Vagina (tissue), 2 donors: ENCODE measurements at regions of chr5 and their contacts with region 1.

Region 1: GRCh38 chr5:38795986-38796741 is 49.6 kb upstream of the OSMR start:
- DNase-seq: no peak
- H3K4me3 ChIP-seq: no peak overlapping the region
- H3K27ac ChIP-seq: peak overlapping the region; percentile 78
- H3K4me1 ChIP-seq: peaks cover 26% of the 10 kb centered on the region
- H3K27me3 ChIP-seq: no peaks in the 10 kb centered on the region
- CTCF ChIP-seq: no peak
- POLR2A ChIP-seq: no peak

Region 2: DNA sequence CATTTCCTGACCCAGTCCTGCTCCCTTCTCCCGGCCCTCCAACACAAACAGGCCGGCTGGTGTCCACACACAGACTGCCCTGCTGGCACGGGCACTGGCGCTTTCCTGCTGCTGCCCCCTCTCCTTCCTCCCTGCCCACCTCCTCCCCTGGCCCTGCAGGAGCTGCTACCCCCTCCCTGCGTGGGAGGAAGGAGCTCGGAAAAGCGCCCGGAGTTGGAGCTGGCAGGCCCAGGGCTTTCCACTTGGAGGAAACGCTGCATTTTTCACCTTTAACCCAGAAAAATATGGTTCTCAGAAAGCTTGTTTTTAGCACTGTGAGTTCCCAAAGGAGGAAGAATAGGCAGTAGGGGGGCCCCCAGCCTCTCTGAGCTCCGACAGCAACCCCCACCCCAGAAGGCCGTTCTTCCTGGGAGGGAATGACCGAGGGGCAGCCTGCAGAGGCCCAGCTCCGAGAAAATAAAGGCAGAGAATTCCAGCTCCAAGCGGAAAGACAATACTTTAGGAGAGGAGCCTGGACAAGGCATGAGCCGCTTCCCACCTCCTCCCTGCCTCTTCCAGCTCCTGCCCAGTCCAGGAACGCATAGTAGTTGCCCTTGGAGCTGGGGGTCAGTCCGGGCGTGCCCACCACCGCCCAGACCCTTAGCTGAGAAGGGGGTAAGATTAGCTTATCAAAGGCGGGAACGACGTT is 328.7 kb before region 1 on chr5:
- intact Hi-C with region 1: loop called (anchors 5 kb)
- DNase-seq: peak in 1 of 2 donors; percentile 90
- H3K4me3 ChIP-seq: peak overlapping the region in 1 of 2 donors; percentile 12
- H3K27ac ChIP-seq: peak overlapping the region; percentile 82
- H3K4me1 ChIP-seq: peaks cover 66% of the 10 kb centered on the region
- H3K27me3 ChIP-seq: no peaks in the 10 kb centered on the region
- CTCF ChIP-seq: no peak
- POLR2A ChIP-seq: no peak

Region 3: DNA sequence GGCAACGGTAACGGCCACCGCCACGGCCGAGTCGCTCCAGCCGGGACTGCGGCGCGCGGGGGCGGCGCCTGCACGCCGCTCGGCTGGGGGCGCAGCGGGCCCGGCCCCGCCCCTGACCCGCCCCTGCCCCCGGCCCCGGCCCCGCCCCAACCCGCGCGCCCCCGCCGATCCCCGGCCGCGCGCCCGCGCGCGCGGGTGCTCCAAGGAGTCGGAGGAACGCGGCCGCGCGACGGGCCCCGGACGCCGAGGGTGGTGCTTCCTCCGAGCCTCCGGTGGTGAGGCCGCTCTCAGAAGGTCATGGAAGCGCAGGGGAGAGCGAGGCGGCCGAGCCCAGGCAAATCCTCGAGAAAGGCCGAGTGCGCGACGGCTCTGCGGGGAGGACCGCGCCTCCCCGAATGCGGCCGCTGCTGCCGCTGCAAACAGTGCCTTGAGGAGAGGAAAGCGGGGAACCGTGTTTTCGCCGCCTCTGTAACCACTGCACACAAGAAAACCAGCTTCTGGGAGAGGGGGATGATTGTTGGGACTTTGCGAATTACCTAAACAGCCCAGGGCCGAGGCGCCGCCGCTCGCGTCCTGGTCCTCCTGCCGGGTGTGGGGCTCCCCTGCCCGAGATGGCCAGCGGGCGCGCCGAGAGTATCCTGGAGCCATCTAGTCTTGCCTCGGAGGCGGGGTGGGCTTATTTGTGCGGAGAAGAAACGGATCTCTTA is 239.4 kb before region 1 on chr5 and contains the start of gene LIFR:
- intact Hi-C with region 1: loop called (anchors 5 kb)
- DNase-seq: peak in 1 of 2 donors; percentile 91
- H3K4me3 ChIP-seq: peak within 1 kb of the TSS; percentile 74 to 97
- H3K27ac ChIP-seq: peak within 1 kb of the TSS; percentile 95
- H3K4me1 ChIP-seq: peaks cover 23% of the 10 kb centered on the region
- H3K27me3 ChIP-seq: no peaks in the 10 kb centered on the region
- CTCF ChIP-seq: no peak
- POLR2A ChIP-seq: peak in 1 of 2 donors; percentile 66
- total RNA-seq, gene LIFR: 63.3 TPM

Region 4: GRCh38 chr5:38853753-38854463 is 57.7 kb after region 1 on chr5:
- intact Hi-C with region 1: no loop called
- DNase-seq: no peak
- H3K4me3 ChIP-seq: no peak overlapping the region
- H3K27ac ChIP-seq: no peak overlapping the region
- H3K4me1 ChIP-seq: no peaks in the 10 kb centered on the region
- H3K27me3 ChIP-seq: no peaks in the 10 kb centered on the region
- CTCF ChIP-seq: no peak
- POLR2A ChIP-seq: no peak